GM12878 (cell line): ENCODE measurements at regions of chr1 and their contacts with region 1.

Region 1: DNA sequence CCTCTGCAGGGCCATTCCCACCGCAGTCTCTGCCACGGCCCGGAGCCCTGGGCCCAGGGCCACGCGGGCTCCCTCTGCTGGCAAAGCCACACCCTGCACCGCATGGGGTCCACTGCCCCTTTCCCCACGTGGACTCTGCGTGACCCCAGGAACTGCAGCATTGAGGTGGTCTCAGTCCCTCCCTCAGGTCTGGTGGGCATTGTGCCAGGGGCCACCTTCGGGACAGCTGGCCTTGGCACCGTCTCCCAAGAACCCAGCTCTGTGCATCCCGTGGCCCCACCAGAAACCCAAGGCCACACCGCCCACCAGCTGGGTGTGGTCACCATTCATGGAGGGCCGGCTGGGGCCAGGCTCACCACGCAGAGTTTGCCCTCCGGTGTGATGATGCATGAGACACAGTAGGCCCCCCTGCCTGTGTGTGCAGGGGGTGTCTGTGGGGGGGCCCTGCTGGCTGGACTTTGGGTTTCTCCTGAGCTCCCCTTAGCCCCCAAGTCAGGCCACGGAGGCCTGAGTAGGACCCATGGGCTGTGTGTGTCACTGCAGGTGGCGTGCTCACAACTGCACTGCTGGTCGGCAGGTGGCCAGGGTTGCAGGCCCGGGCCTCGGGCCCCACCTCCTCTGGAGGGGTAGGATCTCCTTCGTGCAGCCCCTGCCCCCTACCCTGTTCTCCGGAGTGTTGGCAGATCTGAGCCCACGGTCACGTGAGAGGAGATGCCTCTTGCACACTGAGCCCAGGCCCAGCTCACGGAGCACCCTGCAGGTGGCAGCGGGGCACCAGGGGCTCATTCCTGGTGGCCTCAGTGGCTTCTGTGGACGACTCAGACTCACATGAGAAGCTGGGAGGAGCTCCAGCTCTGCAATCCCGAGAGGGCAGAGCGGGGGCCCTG is 5.8 kb downstream of the VWA1 start:
- DNase-seq: no peak
- ATAC-seq: peak; percentile 83
- H3K4me3 ChIP-seq: no peak overlapping the region
- H3K27ac ChIP-seq: no peak overlapping the region
- H3K4me1 ChIP-seq: peaks cover 9% of the 10 kb centered on the region
- H3K27me3 ChIP-seq: no peaks in the 10 kb centered on the region
- CTCF ChIP-seq: peak; percentile 88 to 98 (median 89)
- EP300 ChIP-seq: no peak
- POLR2A ChIP-seq: no peak
- RAD21 ChIP-seq: peak; percentile 56

Region 2: DNA sequence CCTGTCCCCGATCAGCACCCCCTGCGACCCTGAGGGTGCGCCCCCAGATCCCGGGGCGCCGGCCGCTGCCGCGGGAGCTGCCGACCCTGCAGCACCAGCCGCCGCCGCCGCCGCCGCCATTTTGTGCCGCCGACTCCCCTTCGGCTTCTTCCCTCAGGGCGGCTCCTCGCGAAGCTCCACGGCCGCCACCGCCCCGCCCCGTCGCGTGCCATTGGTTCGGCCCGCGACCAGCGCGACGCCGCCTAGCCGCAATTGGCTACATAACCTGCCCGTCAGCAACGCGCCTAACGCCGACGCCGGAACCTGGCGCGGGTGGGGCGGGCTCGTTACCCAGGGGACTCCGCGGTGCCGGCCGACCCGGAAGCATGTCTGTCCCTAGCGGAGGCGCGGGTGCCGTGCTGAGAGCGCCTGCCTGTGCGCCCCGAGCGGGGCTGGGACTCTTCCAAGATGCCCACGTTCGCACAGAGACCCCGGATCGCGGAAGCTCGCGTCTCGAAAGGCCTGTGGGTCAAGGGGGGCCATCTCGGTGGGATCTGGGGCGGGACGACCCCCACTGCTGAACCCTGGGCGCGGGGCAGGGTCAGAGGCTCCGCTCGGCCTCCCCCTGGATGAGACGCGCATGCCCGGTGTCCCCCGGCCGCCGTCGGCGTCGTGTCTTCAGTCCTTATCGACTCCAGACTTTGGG is 41.9 kb before region 1 on chr1 and contains the start of gene CCNL2:
- CTCF ChIA-PET with region 1: interaction called, 15 read pairs
- POLR2A ChIA-PET with region 1: interaction called, 6 read pairs
- RAD21 ChIA-PET with region 1: interaction called, 4 read pairs
- SMC1A ChIA-PET with region 1: interaction called, 3 read pairs
- in situ Hi-C with region 1: no loop called
- intact Hi-C with region 1: loop called (anchors 2 kb)
- DNase-seq: peak; percentile 91
- ATAC-seq: peak; percentile 97
- H3K4me3 ChIP-seq: peak within 1 kb of the TSS; percentile 91
- H3K27ac ChIP-seq: peak within 1 kb of the TSS; percentile 84
- H3K4me1 ChIP-seq: peaks cover 26% of the 10 kb centered on the region
- H3K27me3 ChIP-seq: no peaks in the 10 kb centered on the region
- CTCF ChIP-seq: peak; percentile 38 to 71 (median 55); a peak in 5 of 6 replicates
- EP300 ChIP-seq: no peak
- POLR2A ChIP-seq: peak; percentile 88
- RAD21 ChIP-seq: no peak
- polyA plus RNA-seq, gene CCNL2: 2.1 to 5.5 TPM

Region 3: GRCh38 chr1:1406817-1407635 is 34.2 kb before region 1 on chr1 and contains the start of gene MRPL20:
- CTCF ChIA-PET with region 1: interaction called, 15 read pairs
- POLR2A ChIA-PET with region 1: interaction called, 4 read pairs
- RAD21 ChIA-PET with region 1: interaction called, 8 read pairs
- SMC1A ChIA-PET with region 1: interaction called, 5 read pairs
- in situ Hi-C with region 1: no loop called
- intact Hi-C with region 1: loop called (anchors 2 kb)
- DNase-seq: peak; percentile 66
- ATAC-seq: peak; percentile 96
- H3K4me3 ChIP-seq: peak within 1 kb of the TSS; percentile 98
- H3K27ac ChIP-seq: peak within 1 kb of the TSS; percentile 93
- H3K4me1 ChIP-seq: peaks cover 16% of the 10 kb centered on the region
- H3K27me3 ChIP-seq: no peaks in the 10 kb centered on the region
- CTCF ChIP-seq: no peak
- EP300 ChIP-seq: no peak
- POLR2A ChIP-seq: peak; percentile 98
- RAD21 ChIP-seq: no peak
- polyA plus RNA-seq, gene MRPL20: 519 to 525 TPM

Region 4: GRCh38 chr1:1415751-1416150 is 25.5 kb before region 1 on chr1:
- CTCF ChIA-PET with region 1: interaction called, 16 read pairs
- POLR2A ChIA-PET with region 1: interaction called, 10 read pairs
- RAD21 ChIA-PET with region 1: interaction called, 3 read pairs
- SMC1A ChIA-PET with region 1: interaction called, 4 read pairs
- in situ Hi-C with region 1: no loop called
- intact Hi-C with region 1: no loop called
- DNase-seq: no peak
- ATAC-seq: no peak
- H3K4me3 ChIP-seq: no peak overlapping the region
- H3K27ac ChIP-seq: no peak overlapping the region
- H3K4me1 ChIP-seq: peaks cover 30% of the 10 kb centered on the region
- H3K27me3 ChIP-seq: no peaks in the 10 kb centered on the region
- CTCF ChIP-seq: no peak
- EP300 ChIP-seq: no peak
- POLR2A ChIP-seq: no peak
- RAD21 ChIP-seq: no peak

Region 5: GRCh38 chr1:1463312-1463711 is 22.1 kb after region 1 on chr1:
- CTCF ChIA-PET with region 1: interaction called, 14 read pairs
- POLR2A ChIA-PET with region 1: interaction called, 3 read pairs
- RAD21 ChIA-PET with region 1: interaction called, 3 read pairs
- SMC1A ChIA-PET with region 1: interaction called, 5 read pairs
- in situ Hi-C with region 1: no loop called
- intact Hi-C with region 1: no loop called
- DNase-seq: no peak
- ATAC-seq: no peak
- H3K4me3 ChIP-seq: no peak overlapping the region
- H3K27ac ChIP-seq: no peak overlapping the region
- H3K4me1 ChIP-seq: peaks cover 8% of the 10 kb centered on the region
- H3K27me3 ChIP-seq: no peaks in the 10 kb centered on the region
- CTCF ChIP-seq: no peak
- EP300 ChIP-seq: no peak
- POLR2A ChIP-seq: no peak
- RAD21 ChIP-seq: no peak

Region 6: DNA sequence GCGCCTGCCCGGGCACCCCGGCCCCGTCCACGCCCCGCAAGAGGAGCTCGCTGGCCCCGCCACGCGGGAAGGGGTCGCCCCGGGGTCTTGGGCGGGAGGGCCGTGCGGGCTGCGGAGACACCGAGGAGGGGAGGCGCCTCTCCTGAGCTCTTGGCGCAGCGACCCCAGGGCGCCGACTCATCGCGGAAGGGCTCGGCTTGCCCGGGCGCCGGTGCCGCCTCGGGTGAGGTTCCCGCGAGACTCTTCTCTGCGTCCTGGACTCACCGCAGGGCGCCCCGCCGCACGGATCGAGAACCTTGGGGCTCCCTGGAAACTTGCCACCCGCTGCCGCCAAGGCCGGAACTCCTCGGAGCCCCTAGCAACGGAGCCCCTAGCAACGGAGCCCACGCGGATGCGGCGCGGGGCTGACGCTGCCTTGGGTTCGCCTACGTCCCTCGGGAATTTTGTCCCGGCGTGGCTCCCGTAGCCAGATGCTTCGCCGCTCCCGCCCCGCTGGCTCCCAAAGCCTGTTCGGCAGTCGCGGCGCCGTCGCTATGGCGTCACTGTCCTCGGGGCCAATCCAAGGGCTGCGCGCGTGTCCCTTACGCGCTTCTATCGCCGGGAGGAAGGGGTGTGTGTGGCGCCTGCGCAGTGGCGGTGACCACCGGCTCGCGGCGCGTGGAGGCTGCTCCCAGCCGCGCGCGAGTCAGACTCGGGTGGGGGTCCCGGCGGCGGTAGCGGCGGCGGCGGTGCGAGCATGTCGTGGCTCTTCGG is 70.5 kb after region 1 on chr1 and contains the start of gene ATAD3A:
- CTCF ChIA-PET with region 1: interaction called, 17 read pairs
- POLR2A ChIA-PET with region 1: no interaction called
- RAD21 ChIA-PET with region 1: no interaction called
- SMC1A ChIA-PET with region 1: no interaction called
- in situ Hi-C with region 1: no loop called
- intact Hi-C with region 1: no loop called
- DNase-seq: peak; percentile 84
- ATAC-seq: peak; percentile 94
- H3K4me3 ChIP-seq: peak within 1 kb of the TSS; percentile 76
- H3K27ac ChIP-seq: peak within 1 kb of the TSS; percentile 95
- H3K4me1 ChIP-seq: no peaks in the 10 kb centered on the region
- H3K27me3 ChIP-seq: no peaks in the 10 kb centered on the region
- CTCF ChIP-seq: no peak
- EP300 ChIP-seq: no peak
- POLR2A ChIP-seq: peak; percentile 74; the same call in 1 of the 2 replicates
- RAD21 ChIP-seq: no peak
- polyA plus RNA-seq, gene ATAD3A: 0.05 to 1.3 TPM

Region 7: DNA sequence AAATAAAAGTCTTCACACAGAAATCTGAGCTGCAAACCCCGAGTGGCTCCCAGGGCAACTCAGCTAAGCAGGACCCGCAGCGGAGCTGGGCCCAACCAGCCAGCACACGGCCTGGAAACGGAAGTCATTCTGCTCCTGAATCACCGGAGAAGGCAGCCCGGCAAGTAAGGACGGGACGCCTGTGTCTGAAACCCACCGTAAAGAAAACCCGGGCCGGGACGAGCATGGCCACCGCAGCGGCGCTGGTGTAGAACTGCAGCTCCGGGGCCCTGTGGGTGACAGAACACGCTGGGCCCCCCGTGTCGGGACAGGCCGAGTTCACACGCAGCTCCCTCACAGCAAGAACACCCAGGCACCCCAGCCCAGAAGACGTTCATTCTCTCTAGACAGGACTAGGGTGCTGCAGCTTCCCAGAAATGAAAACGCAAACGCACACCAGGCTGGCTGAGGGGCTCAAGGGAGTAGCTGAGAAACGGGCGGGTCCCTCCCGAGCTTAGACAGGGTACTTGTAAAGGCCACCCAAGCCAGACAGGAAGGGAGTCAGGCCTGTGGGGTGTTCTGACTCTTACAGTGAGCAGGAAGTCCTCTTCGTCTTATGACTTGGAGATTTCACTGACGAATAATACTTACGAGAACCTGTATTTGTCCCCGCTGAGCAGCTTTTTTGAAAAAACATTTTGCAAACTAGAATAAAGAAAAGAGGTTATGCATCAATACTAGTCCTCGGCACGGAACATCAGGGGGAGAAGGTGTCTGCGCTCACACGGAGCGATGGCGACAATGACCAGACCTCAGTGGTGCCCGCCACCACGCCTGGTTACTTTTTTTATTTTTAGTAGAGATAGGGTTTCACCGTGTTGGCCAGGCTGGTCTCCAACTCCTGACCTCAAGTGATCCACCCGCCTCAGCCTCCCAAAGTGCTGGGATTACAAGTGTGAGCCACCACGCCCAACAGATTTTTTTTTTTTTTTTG is 228.5 kb after region 1 on chr1:
- CTCF ChIA-PET with region 1: no interaction called
- POLR2A ChIA-PET with region 1: no interaction called
- RAD21 ChIA-PET with region 1: no interaction called
- SMC1A ChIA-PET with region 1: no interaction called
- in situ Hi-C with region 1: no loop called
- intact Hi-C with region 1: no loop called
- DNase-seq: no peak
- ATAC-seq: no peak
- H3K4me3 ChIP-seq: no peak overlapping the region
- H3K27ac ChIP-seq: no peak overlapping the region
- H3K4me1 ChIP-seq: no peaks in the 10 kb centered on the region
- H3K27me3 ChIP-seq: no peaks in the 10 kb centered on the region
- CTCF ChIP-seq: no peak
- EP300 ChIP-seq: no peak
- POLR2A ChIP-seq: no peak
- RAD21 ChIP-seq: no peak